Activated T-helper 1 cell treated with anti-CD3 and anti-CD28 coated beads, Interleukin-12 subunit alpha, Interleukin-12 subunit beta, Interleukin-2, Interleukin-4 antibody, amounts not matched to agents 30 ng/mL and 10 ng/mL and 1 ng/mL, durations not matched to agents 14 hours and 24 hours and 36 hours (primary cell): ENCODE measurements at regions of chr21 and their contacts with region 1.

Region 1: DNA sequence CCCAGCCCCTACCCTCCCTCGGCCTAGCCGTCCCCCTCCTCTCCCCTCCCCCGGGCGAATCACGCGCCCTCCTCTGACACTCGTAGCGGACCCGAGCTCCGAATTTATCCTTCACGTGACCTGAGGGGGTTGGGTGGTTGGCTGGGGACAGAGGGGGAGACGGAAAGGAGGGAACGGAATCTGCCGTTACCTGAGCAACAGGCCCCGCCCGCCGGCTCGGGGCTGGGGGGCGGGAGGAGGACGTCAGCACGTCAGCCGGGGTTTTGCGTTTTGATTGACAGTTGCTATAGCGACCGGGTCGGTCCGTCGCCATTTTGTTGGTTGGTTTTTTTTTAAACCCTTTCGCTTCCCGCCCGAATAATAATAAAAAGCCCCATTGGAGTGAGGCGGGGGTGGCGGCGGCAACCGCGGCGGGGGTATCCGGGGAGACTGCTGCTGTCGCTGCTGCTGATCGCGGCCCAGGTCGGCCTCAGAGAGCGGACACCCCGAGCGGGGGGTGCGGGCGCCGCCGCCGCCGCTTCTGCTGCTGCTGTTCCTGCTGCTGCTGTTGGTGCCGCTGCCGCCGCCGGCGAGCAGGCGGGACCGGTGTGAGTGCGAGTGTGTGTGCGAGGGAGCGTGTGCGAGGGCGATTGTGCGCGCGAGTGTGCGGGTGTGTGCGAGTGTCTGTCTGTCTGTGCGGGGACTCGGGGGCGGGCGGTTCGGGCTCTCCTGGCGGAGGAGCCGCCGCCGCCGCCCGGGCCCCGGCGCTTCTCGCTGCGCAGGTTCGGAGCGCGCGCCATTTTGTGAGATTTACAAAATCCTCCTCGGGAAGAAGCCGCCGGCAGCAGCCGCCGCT is at the start of gene DYRK1A:
- DNase-seq: peak; percentile 97
- H3K4me3 Mint-ChIP-seq: peak within 1 kb of the TSS; percentile 98
- H3K27ac Mint-ChIP-seq: peak within 1 kb of the TSS; percentile 99
- H3K4me1 Mint-ChIP-seq: peaks cover 44% of the 10 kb centered on the region
- H3K27me3 Mint-ChIP-seq: peaks cover 2% of the 10 kb centered on the region
- total RNA-seq, gene DYRK1A: 66.5 and 68.1 TPM in 2 replicates

Region 2: GRCh38 chr21:36989699-36990507 is 376.8 kb before region 1 on chr21:
- intact Hi-C with region 1: loop called (anchors 5 kb)
- DNase-seq: peak; percentile 87
- H3K4me3 Mint-ChIP-seq: peak overlapping the region; percentile 87
- H3K27ac Mint-ChIP-seq: peak overlapping the region; percentile 96
- H3K4me1 Mint-ChIP-seq: peaks cover 37% of the 10 kb centered on the region
- H3K27me3 Mint-ChIP-seq: no peaks in the 10 kb centered on the region

Region 3: DNA sequence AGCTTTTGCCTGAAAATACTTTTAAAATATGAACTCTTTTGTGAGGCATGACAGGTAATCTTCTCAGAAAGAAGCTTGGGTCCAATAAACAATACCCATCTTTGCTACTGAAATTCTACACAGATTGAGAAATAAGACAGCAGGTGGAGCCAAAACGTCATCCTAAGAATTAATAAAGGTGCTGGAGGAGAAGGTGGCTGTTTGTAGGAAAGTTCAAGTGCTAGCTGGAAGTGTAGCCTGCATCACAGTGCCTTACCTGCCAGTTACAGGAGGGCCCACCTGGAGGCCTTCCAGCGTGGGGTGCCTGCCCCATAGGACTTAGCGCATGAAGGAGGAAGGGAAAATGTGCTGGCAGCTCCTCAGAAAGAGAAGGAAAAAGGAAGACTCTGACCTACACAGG is 200.0 kb before region 1 on chr21:
- intact Hi-C with region 1: no loop called
- DNase-seq: no peak
- H3K4me3 Mint-ChIP-seq: no peak overlapping the region
- H3K27ac Mint-ChIP-seq: peak overlapping the region; percentile 50
- H3K4me1 Mint-ChIP-seq: peaks cover 10% of the 10 kb centered on the region
- H3K27me3 Mint-ChIP-seq: no peaks in the 10 kb centered on the region

Region 4: GRCh38 chr21:37220981-37221664 is 145.6 kb before region 1 on chr21:
- intact Hi-C with region 1: loop called (anchors 1 kb)
- DNase-seq: peak; percentile 89
- H3K4me3 Mint-ChIP-seq: peak overlapping the region; percentile 90
- H3K27ac Mint-ChIP-seq: peak overlapping the region; percentile 91
- H3K4me1 Mint-ChIP-seq: peaks cover 48% of the 10 kb centered on the region
- H3K27me3 Mint-ChIP-seq: peaks cover 1% of the 10 kb centered on the region

Region 5: GRCh38 chr21:37267269-37268184 is 99.2 kb before region 1 on chr21 and contains the start of gene VPS26C:
- intact Hi-C with region 1: loop called (anchors 1 kb)
- DNase-seq: peak; percentile 99
- H3K4me3 Mint-ChIP-seq: peak within 1 kb of the TSS; percentile 97
- H3K27ac Mint-ChIP-seq: peak within 1 kb of the TSS; percentile 98
- H3K4me1 Mint-ChIP-seq: peaks cover 51% of the 10 kb centered on the region
- H3K27me3 Mint-ChIP-seq: peaks cover 8% of the 10 kb centered on the region
- total RNA-seq, gene VPS26C: 53.8 and 58.9 TPM in 2 replicates

Region 6: DNA sequence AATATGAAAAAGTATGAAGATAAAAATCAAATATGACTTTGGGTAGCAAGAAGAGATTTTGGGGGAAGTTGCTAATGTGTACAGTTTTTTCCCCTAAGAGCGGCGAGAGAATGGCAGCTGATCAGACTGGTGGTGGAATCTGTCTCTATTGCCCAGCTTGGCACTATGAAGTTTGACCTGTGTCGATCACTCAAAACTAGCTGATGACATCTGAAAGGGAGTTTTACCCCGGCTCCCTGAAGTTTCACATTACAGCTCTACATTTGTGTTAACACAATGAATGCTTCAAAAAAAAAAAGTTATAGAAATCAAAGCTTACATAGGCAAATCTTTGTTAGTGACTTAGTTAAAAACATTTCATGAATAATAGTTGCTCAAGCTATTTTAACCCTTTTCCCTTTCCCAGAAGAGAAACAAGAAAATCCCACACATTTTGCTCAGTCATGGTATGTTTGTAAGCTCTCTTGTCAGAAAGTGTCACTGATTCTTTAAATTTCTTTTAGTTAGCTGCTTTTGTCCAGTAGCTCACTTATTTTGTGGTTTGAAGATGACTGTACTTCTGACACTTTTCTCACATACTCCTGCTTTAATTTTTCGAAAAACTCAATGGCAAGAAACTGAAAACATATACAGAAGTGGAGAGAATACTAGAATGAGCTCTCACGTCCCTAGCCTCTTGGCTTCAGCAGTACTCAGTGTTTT is 41.2 kb after region 1 on chr21:
- intact Hi-C with region 1: loop called (anchors 1 kb)
- DNase-seq: no peak
- H3K4me3 Mint-ChIP-seq: no peak overlapping the region
- H3K27ac Mint-ChIP-seq: peak overlapping the region; percentile 79
- H3K4me1 Mint-ChIP-seq: peaks cover 74% of the 10 kb centered on the region
- H3K27me3 Mint-ChIP-seq: no peaks in the 10 kb centered on the region

Region 7: DNA sequence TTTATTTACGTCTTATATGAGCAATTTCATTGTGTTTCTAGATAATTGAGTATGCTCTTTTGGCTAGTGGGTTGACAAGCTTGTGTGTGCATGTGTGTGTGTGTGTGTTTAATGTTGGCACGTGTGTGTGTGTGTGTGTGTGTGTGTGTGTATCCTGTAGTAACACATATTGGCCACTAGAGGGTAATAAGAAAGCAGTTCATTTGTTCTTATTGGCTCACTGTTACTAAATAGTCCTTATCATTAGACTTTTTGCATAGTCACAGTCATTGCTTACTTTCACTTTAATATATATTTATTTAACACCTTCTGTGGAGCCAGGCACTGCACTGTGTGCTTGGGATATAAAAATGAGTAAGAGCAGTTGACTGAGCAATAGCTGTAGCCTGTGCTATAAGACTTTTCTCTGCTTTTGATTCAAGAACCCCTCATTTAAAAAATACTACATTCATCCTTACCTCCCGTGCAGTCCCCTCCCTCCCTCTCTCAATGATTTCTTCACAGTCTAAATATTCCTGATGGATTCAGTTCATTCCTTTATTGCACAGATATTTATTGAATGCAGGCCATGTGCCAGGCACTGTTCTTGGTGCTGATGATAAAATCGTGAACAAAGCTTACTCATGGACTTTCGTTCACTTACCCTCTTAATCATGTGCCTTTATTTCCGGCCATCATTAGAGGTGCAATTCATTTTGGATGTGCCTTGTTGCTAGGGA is 96.5 kb after region 1 on chr21:
- intact Hi-C with region 1: loop called (anchors 1 kb)
- DNase-seq: peak; percentile 14
- H3K4me3 Mint-ChIP-seq: no peak overlapping the region
- H3K27ac Mint-ChIP-seq: peak overlapping the region; percentile 21
- H3K4me1 Mint-ChIP-seq: peaks cover 56% of the 10 kb centered on the region
- H3K27me3 Mint-ChIP-seq: no peaks in the 10 kb centered on the region

Region 8: GRCh38 chr21:39183237-39184007 is 1816.7 kb after region 1 on chr21 and contains the start of gene PSMG1:
- intact Hi-C with region 1: loop called (anchors 2 kb)
- DNase-seq: peak; percentile 91
- H3K4me3 Mint-ChIP-seq: peak within 1 kb of the TSS; percentile 98
- H3K27ac Mint-ChIP-seq: peak within 1 kb of the TSS; percentile 98
- H3K4me1 Mint-ChIP-seq: peaks cover 55% of the 10 kb centered on the region
- H3K27me3 Mint-ChIP-seq: no peaks in the 10 kb centered on the region
- total RNA-seq, gene PSMG1: 102 and 103 TPM in 2 replicates